GM12878 (cell line): ENCODE measurements at regions of chr2 and their contacts with region 1.

Region 1: GRCh38 chr2:199739413-199740110 is 111.4 kb downstream of the FTCDNL1 start:
- DNase-seq: no peak
- ATAC-seq: peak; percentile 68
- H3K4me3 ChIP-seq: no peak overlapping the region
- H3K27ac ChIP-seq: no peak overlapping the region
- H3K4me1 ChIP-seq: no peaks in the 10 kb centered on the region
- H3K27me3 ChIP-seq: peaks cover 0 to 2% of the 10 kb centered on the region in 2 experiments; a peak in 1 of 4 replicates
- CTCF ChIP-seq: peak; percentile 72 to 81 (median 79)
- EP300 ChIP-seq: no peak
- POLR2A ChIP-seq: no peak
- RAD21 ChIP-seq: peak; percentile 78

Region 2: DNA sequence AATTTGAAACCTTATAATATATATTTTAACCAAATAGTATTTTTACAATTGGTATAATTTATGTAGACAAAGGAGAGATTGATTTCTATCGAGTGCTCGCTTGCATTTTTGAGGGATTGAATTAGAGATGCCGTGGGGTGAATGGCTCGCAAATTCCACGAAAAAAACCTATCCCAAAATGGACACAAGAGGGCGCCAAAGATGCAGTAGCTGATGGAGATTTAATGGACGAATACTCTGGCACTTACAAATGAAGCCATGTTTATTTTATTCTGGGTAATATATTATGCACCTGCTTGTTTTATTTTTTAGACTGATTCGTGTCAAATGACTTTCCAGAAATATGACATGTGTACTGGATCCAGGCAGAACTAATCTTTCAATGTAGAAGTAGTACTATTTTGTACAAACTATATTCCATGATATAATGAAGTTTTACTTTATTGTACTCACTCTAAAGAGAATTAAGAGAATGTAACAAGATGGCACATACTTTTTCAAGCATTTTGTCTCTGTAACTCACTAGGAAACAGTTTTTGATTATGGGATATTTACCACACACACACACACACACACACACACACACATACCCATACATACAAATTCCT is 1429.8 kb before region 1 on chr2:
- CTCF ChIA-PET with region 1: interaction called, 42 read pairs
- POLR2A ChIA-PET with region 1: no interaction called
- RAD21 ChIA-PET with region 1: interaction called, 12 read pairs
- SMC1A ChIA-PET with region 1: interaction called, 16 read pairs
- in situ Hi-C with region 1: loop called (anchors 5 kb)
- intact Hi-C with region 1: loop called (anchors 1 kb)
- DNase-seq: no peak
- ATAC-seq: peak; percentile 67
- H3K4me3 ChIP-seq: no peak overlapping the region
- H3K27ac ChIP-seq: no peak overlapping the region
- H3K4me1 ChIP-seq: no peaks in the 10 kb centered on the region
- H3K27me3 ChIP-seq: peaks cover 1 to 2% of the 10 kb centered on the region in 2 experiments; a peak in 1 of 4 replicates
- CTCF ChIP-seq: peak; percentile 69 to 83 (median 81)
- EP300 ChIP-seq: no peak
- POLR2A ChIP-seq: no peak
- RAD21 ChIP-seq: peak; percentile 79

Region 3: GRCh38 chr2:198316852-198317396 is 1422.6 kb before region 1 on chr2:
- CTCF ChIA-PET with region 1: interaction called, 42 read pairs
- POLR2A ChIA-PET with region 1: no interaction called
- RAD21 ChIA-PET with region 1: interaction called, 12 read pairs
- SMC1A ChIA-PET with region 1: interaction called, 16 read pairs
- in situ Hi-C with region 1: loop called (anchors 5 kb)
- intact Hi-C with region 1: no loop called
- DNase-seq: no peak
- ATAC-seq: no peak
- H3K4me3 ChIP-seq: no peak overlapping the region
- H3K27ac ChIP-seq: no peak overlapping the region
- H3K4me1 ChIP-seq: no peaks in the 10 kb centered on the region
- H3K27me3 ChIP-seq: no peaks in the 10 kb centered on the region; a peak in 1 of 4 replicates
- CTCF ChIP-seq: no peak
- EP300 ChIP-seq: no peak
- POLR2A ChIP-seq: no peak
- RAD21 ChIP-seq: no peak

Region 4: DNA sequence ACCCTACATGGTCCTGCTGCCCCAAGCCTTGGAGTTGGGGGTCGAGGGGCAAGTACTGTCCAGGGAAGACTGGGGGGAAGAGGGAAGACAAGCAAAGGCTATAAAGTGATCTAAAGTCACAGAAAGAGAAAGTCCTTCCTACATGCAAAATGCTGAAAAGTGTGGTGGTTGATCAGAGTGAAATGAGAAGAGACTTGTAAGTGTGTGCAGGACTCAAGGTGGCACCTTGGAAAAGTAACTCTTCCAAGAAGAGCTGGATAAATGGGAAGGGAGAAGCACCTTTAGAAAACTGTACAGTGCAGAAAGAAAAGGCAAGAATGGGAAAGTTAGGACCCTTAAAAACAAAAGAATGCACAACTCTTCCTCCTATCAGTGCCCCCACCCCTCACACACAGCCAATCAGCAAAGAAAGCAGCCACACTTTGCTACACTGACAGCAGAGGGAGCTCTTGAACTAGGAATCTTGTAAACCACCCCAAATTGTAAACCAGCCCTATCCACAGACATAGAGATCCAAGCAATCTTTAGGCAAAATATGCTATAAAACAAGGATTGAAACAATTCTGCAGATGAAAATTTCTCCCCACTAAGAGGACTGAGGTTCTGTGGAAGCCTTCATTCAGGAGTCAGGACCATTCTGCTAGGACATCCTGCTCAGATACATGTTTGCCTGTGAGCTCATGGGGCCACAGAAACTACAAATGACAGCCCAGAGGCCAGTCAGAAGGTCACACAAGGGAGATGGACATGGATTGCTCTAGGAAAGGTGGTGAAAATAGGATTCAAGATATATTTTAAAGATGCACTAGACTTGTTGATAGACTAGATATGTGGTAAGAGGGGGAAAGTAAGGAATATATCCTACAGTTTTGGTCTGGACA is 35.0 kb before region 1 on chr2:
- CTCF ChIA-PET with region 1: interaction called, 17 read pairs
- POLR2A ChIA-PET with region 1: no interaction called
- RAD21 ChIA-PET with region 1: interaction called, 8 read pairs
- SMC1A ChIA-PET with region 1: interaction called, 3 read pairs
- in situ Hi-C with region 1: no loop called
- intact Hi-C with region 1: loop called (anchors 1 kb)
- DNase-seq: no peak
- ATAC-seq: peak; percentile 81
- H3K4me3 ChIP-seq: no peak overlapping the region
- H3K27ac ChIP-seq: no peak overlapping the region
- H3K4me1 ChIP-seq: no peaks in the 10 kb centered on the region
- H3K27me3 ChIP-seq: no peaks in the 10 kb centered on the region
- CTCF ChIP-seq: peak; percentile 42 to 61 (median 49); a peak in 5 of 6 replicates
- EP300 ChIP-seq: no peak
- POLR2A ChIP-seq: no peak
- RAD21 ChIP-seq: peak; percentile 62

Region 5: GRCh38 chr2:199716807-199717586 is 22.6 kb before region 1 on chr2:
- CTCF ChIA-PET with region 1: interaction called, 11 read pairs
- POLR2A ChIA-PET with region 1: no interaction called
- RAD21 ChIA-PET with region 1: no interaction called
- SMC1A ChIA-PET with region 1: no interaction called
- in situ Hi-C with region 1: no loop called
- intact Hi-C with region 1: no loop called
- DNase-seq: no peak
- ATAC-seq: no peak
- H3K4me3 ChIP-seq: no peak overlapping the region
- H3K27ac ChIP-seq: no peak overlapping the region
- H3K4me1 ChIP-seq: no peaks in the 10 kb centered on the region
- H3K27me3 ChIP-seq: no peaks in the 10 kb centered on the region
- CTCF ChIP-seq: no peak
- EP300 ChIP-seq: no peak
- POLR2A ChIP-seq: no peak
- RAD21 ChIP-seq: no peak

Region 6: DNA sequence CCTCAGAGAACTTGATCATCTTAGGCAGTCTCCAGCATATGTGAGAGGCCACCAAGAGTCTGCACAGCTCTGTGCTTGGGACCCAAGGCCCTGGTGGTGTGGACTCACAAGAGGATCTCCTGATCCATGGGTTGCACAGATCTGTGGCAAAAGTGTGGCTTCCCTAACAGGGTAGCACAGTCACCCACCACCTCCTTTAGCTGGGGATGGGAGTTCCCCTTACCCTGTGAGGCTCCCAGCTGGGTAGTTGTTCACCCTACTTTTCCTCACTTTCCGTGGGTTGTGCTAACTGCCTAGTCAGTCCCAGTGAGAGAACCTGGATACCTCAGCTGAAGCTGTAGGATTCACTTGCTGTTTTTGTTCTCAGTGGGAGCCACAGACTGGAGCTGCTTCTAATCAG is 12.3 kb before region 1 on chr2:
- CTCF ChIA-PET with region 1: interaction called, 11 read pairs
- POLR2A ChIA-PET with region 1: no interaction called
- RAD21 ChIA-PET with region 1: no interaction called
- SMC1A ChIA-PET with region 1: no interaction called
- in situ Hi-C with region 1: no loop called
- intact Hi-C with region 1: no loop called
- DNase-seq: no peak
- ATAC-seq: no peak
- H3K4me3 ChIP-seq: no peak overlapping the region
- H3K27ac ChIP-seq: no peak overlapping the region
- H3K4me1 ChIP-seq: no peaks in the 10 kb centered on the region
- H3K27me3 ChIP-seq: no peaks in the 10 kb centered on the region
- CTCF ChIP-seq: no peak
- EP300 ChIP-seq: no peak
- POLR2A ChIP-seq: no peak
- RAD21 ChIP-seq: no peak

Region 7: DNA sequence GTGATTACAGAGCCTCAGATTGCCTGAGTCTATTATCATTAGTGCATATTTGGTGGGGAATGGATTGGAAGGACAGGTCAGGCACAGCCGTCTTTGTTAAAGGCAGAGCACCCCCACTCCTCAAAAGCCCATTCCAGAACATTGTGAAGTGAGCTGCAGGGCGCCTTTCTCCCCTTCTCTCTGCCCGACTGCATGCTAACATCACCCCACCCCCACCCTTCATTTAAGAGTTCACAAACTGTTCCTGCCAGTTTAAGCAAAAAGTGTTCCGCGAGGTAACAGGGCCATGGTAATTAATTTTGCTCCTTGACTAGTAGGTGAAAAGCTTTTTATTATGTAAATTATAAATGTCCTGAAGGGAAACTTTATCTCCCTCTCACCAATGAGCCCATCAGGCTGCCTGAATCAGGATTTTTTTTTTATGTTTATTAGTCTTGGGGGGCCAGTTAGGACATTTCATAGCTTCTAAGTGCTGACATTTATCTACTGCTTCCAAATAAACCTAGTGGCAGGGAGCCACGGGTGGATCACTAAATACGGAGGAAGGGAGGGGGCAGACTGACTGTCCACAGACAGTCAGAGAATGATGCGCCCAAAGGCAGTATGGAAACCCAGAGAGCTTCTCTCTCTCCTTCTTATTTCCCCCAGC is 12.0 kb after region 1 on chr2:
- CTCF ChIA-PET with region 1: interaction called, 15 read pairs
- POLR2A ChIA-PET with region 1: no interaction called
- RAD21 ChIA-PET with region 1: no interaction called
- SMC1A ChIA-PET with region 1: interaction called, 3 read pairs
- in situ Hi-C with region 1: no loop called
- intact Hi-C with region 1: no loop called
- DNase-seq: no peak
- ATAC-seq: no peak
- H3K4me3 ChIP-seq: no peak overlapping the region
- H3K27ac ChIP-seq: no peak overlapping the region
- H3K4me1 ChIP-seq: no peaks in the 10 kb centered on the region
- H3K27me3 ChIP-seq: no peaks in the 10 kb centered on the region
- CTCF ChIP-seq: no peak
- EP300 ChIP-seq: no peak
- POLR2A ChIP-seq: no peak
- RAD21 ChIP-seq: no peak